Mucosa of descending colon (tissue), 3 donors: ENCODE measurements at regions of chr17 and their contacts with region 1.

Region 1: DNA sequence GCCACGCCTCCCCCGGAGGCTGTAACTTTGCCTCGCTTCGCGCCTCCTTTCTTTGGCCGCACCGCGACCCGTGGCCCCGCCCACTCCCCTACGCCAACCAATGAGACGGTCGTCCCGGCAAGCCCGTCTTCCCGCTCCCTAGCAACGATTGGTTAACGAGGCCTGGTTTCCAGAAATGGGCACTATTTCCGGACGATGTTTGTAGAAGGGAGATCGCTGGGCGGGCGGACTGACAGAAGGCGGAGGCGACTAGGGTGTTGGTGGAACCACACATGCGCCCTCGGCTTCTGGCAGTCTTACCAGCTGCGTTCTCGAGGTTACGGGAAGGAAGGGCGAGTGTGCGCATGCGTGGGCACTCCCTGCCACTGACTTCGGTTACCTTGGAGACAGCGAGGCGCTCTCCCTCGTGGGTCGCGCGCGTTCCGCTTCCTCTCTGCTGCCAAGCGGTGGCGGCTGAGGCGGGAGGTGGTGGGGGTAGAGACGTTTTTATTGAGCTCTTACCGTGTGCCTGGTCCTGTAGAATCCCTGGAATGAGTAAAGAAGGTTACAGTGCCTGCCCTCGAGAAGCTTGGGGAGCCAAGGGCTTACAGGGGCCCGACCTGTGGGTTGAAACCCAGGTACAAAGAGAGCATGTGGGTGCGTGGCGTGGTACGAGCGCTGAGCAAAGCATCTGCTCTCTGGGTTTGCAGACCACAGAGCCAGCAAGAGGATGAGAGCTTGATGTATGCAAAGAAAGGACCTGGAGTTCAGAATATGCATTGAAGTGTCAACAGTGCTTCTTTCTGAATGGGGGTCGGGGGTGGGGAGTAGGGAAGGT is 500 bp upstream of the MAP3K14 start:
- DNase-seq: peak; percentile 99 to 100 (median 100)
- ATAC-seq: peak; percentile 83
- H3K4me3 ChIP-seq: peak overlapping the region; percentile 76
- H3K4me1 ChIP-seq: peaks cover 75% of the 10 kb centered on the region
- CTCF ChIP-seq: no peak

Region 2: DNA sequence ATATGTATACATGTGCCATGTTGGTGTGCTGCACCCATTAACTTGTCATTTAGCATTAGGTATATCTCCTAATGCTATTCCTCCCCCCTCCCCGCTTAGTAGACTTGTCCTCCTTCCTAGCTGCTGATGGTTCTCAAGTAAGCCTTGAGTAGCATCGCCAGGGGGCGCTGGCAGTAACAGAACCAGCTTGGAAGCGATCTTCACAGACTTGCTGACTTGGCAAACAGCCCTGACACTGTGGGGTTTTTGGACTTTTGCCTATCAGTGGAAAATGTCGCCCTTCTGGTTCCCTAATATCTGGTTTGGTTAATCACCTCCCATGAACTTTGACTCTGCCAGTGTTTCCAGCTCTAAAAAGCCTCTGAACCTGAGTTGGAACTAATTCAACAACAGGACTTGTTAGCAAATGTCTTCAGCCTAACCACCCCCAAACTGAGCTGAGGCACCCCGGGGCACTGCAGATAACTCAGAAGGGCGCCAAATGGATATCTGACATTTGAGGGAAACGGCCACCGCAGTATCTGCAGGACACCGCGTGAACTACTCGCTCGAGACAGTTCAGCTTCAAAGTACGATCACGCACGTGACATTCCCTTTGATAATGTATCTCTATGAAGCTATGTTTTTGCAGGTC is 40.0 kb before region 1 on chr17:
- intact Hi-C with region 1: loop called in 1 of 2 experiments (anchors 5 kb)
- DNase-seq: peak; percentile 92 to 99 (median 92)
- ATAC-seq: peak; percentile 92
- H3K4me3 ChIP-seq: no peak overlapping the region
- H3K4me1 ChIP-seq: no peaks in the 10 kb centered on the region
- CTCF ChIP-seq: peak; percentile 60

Region 3: GRCh38 chr17:45425125-45425983 is 108.0 kb after region 1 on chr17:
- intact Hi-C with region 1: no loop called
- DNase-seq: peak; percentile 92 to 94 (median 94)
- ATAC-seq: peak; percentile 88
- H3K4me3 ChIP-seq: peak overlapping the region; percentile 32
- H3K4me1 ChIP-seq: peaks cover 23% of the 10 kb centered on the region
- CTCF ChIP-seq: no peak